Dendritic cell treated with granulocyte-macrophage colony-stimulating factor and Interleukin-4, amounts not matched to agents 40 ng/mL and 50 ng/mL, for 4 days (primary cell): ENCODE measurements at regions of chr17 and their contacts with region 1.

Region 1: DNA sequence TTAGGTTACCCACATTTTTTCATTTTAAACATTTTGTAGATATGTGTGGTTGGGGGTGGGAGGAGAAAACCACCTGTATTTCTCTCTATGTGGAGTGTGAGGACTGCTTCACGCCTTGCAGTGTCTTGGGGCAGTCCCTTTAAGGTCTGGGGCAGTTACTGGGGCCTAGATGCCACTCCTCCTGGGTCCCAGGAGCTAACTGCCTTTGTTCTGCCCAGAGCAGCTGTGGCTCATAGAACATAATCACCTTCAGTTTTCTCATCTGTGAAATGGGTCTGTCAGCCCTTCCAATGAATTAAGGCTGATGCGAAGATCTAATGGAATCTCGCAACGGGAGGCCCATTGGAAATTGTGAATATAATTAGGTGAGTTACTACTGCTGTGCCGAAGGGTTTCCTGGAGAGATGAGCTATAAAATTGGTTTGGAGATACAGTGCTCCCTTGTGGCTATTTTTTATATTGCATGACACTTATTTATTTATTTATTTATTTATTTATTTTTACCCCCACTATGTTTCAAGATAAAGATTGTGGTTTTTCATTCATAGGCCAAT is 22.9 kb downstream of the DHRS7C start:
- H3K4me3 Mint-ChIP-seq: no peak overlapping the region
- H3K27ac Mint-ChIP-seq: no peak overlapping the region
- H3K4me1 Mint-ChIP-seq: no peaks in the 10 kb centered on the region
- H3K27me3 Mint-ChIP-seq: peaks cover 7% of the 10 kb centered on the region

Region 2: GRCh38 chr17:9729034-9729650 is 39.3 kb before region 1 on chr17:
- intact Hi-C with region 1: loop called (anchors 1 kb)
- H3K4me3 Mint-ChIP-seq: no peak overlapping the region
- H3K27ac Mint-ChIP-seq: no peak overlapping the region
- H3K4me1 Mint-ChIP-seq: peaks cover 14% of the 10 kb centered on the region
- H3K27me3 Mint-ChIP-seq: no peaks in the 10 kb centered on the region

Region 3: DNA sequence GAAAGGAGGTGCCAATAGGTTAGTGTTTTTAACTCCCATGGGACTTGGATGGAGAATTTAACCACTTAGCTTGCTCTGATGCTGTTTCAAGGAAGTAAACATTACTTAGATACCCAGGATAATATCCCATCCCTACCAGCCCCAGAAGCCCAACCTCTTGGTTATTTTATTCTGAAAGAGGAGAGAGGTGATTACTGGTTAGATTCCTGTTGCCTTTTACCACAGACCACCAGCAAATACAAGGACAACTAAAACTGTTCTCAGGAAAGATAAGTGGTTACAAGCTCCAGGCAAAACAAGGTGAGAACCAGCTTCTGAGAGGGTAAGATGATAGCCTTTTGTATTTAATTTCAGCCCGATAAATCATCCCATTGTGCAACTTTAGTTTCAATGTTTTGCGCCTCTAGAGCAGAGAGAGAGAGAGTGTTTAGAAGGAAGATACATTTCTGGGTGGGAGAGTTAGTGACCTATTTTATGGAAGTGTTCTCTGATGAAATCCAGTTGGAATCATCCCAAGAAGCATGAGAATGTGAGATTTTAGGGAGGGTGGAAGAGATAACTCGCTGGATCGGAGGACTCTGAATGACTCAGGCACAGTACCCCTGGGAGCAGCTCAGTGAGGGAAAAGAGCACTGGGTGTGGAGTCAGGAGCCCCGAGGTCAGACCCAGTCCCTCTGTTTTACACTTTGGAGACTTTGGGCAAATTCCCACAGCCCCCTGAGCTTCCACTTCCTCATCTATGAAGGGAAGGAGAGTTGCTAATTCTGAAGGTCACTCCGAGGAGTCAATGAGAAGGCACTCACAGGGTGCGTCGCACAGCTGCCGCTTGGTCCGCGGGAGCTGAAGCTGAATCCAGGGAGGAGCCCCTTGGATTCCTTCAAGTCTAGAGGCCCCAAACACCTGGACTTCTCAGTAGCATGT is 69.4 kb after region 1 on chr17:
- intact Hi-C with region 1: no loop called
- H3K4me3 Mint-ChIP-seq: no peak overlapping the region
- H3K27ac Mint-ChIP-seq: no peak overlapping the region
- H3K4me1 Mint-ChIP-seq: no peaks in the 10 kb centered on the region
- H3K27me3 Mint-ChIP-seq: peaks cover 10% of the 10 kb centered on the region